MCF 10A (cell line): ENCODE measurements at regions of chr11 and their contacts with region 1.

Region 1: GRCh38 chr11:90803378-90803777 is 580.5 kb upstream of the CHORDC1 start:
- DNase-seq: peak; percentile 60
- H3K4me3 Mint-ChIP-seq: peak overlapping the region; percentile 53
- H3K27ac Mint-ChIP-seq: peak overlapping the region; percentile 85
- H3K4me1 Mint-ChIP-seq: peaks cover 27% of the 10 kb centered on the region
- H3K27me3 Mint-ChIP-seq: no peaks in the 10 kb centered on the region
- CTCF ChIP-seq: no peak

Region 2: DNA sequence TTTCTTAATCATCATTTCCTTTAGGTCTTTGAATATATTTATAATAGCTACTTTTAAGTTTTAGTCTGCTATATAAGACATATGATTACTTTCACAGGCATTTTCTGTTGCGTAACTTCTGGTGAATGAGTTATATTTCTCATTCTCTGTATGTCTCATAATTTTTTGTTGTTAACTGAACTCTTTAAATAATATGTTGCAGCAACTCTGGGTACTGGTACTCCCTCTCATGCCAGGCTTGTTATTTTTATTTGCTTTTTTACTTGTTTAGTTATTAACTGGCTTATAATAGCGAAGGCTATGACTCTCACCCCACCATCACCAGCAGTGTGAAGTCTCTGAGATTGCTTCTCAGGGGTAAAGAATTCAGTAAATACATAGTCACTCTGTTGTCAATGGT is 56.3 kb before region 1 on chr11:
- CTCF ChIA-PET with region 1: no interaction called
- POLR2A ChIA-PET with region 1: interaction called, 3 read pairs
- intact Hi-C with region 1: loop called (anchors 5 kb)
- DNase-seq: peak; percentile 91
- H3K4me3 Mint-ChIP-seq: no peak overlapping the region
- H3K27ac Mint-ChIP-seq: peak overlapping the region; percentile 50
- H3K4me1 Mint-ChIP-seq: peaks cover 6% of the 10 kb centered on the region
- H3K27me3 Mint-ChIP-seq: no peaks in the 10 kb centered on the region
- CTCF ChIP-seq: no peak